Activated CD4-positive, alpha-beta memory T cell treated with anti-CD3 and anti-CD28 coated beads for 36 hours (primary cell): ENCODE measurements at regions of chr12 and their contacts with region 1.

Region 1: GRCh38 chr12:12384571-12385340 is 27.9 kb downstream of the BORCS5 start:
- DNase-seq: peak; percentile 80
- H3K4me3 Mint-ChIP-seq: peak overlapping the region; percentile 48
- H3K27ac Mint-ChIP-seq: peak overlapping the region; percentile 93
- H3K4me1 Mint-ChIP-seq: peaks cover 68% of the 10 kb centered on the region
- H3K27me3 Mint-ChIP-seq: no peaks in the 10 kb centered on the region

Region 2: DNA sequence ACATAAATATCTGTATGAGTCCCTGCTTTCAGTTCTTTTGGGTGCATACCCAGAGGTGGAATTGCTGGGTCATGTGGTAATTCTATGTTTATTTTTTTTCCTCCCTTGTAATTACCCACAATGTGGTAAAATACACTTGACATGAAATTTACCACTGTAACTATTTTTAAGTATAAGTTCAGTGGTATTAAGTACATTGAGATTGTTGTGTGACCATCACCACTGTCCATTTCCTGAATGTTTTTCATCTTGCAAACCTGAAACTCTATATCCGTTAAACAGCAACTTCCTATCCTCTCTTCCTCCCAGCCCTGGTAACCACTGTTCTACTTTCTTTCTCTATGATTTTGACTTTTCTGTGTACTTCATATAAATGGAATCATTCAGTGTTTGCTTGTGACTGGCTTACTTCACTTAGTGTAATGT is 23.5 kb after region 1 on chr12:
- CTCF ChIA-PET with region 1: no interaction called
- POLR2A ChIA-PET with region 1: no interaction called
- intact Hi-C with region 1: loop called (anchors 1 kb)
- DNase-seq: no peak
- H3K4me3 Mint-ChIP-seq: no peak overlapping the region
- H3K27ac Mint-ChIP-seq: peak overlapping the region; percentile 24
- H3K4me1 Mint-ChIP-seq: peaks cover 36% of the 10 kb centered on the region
- H3K27me3 Mint-ChIP-seq: no peaks in the 10 kb centered on the region

Region 3: DNA sequence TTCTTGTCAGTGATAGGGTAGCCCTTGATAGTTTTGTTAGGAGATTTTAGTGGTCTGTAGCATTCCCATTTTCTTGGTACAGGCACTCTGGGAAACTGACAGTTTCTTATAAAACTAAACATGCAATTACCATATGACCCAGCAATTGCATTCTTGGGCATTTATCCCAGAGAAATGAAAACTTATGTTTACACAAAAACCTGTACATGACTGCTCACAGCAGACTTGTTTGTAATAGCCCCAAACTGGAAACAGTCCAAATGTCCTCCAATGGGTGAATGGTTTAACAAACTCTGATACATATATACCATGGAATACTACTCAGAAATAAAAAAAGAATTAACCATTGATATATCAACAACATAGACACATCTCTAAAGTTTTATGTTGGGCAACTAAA is 47.6 kb after region 1 on chr12:
- CTCF ChIA-PET with region 1: no interaction called
- POLR2A ChIA-PET with region 1: no interaction called
- intact Hi-C with region 1: loop called (anchors 2 kb)
- DNase-seq: no peak
- H3K4me3 Mint-ChIP-seq: no peak overlapping the region
- H3K27ac Mint-ChIP-seq: peak overlapping the region; percentile 57
- H3K4me1 Mint-ChIP-seq: peaks cover 73% of the 10 kb centered on the region
- H3K27me3 Mint-ChIP-seq: no peaks in the 10 kb centered on the region